ENCODE measurements at regions of chr7 and their contacts with region 1.

Region 1: DNA sequence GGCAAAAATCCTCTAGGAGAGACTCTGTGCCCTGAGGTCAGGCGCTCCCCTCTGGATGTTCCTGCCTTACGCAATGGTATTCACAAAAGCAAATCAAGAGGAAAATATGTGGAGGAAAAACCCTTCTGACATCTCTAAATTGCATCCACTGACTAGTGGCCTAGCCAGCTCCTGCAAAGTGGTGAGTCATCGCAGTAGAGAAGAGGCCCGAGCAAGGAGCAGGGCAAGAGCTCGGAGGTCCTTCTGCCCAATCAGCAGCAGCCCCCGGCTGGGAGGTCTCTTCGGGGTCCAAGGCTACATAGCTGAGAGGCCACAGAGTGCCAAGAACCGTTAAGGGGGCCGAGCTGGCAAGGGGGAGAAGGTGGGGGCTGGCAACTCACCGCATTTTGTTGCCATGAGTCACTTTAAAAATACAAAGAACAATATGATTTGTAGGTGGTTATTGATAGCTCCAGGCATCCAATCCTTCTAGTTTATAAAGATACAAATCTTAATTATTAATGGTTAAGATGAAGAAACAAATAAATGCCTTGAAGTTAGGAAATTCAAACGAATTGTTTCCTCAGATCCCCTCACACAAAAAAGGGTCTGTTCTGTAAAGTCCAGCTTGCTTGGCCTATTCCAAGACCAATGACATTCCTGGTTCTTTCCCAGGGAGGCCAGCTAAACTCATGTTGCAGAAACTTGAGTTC is 161.6 kb downstream of the PKD1L1 start:
- DNase-seq: peak in 1 of 2 donors; percentile 96
- H3K4me3 ChIP-seq: no peak overlapping the region
- H3K27ac ChIP-seq: peak overlapping the region; percentile 82
- H3K4me1 ChIP-seq: peaks cover 40% of the 10 kb centered on the region
- H3K27me3 ChIP-seq: no peaks in the 10 kb centered on the region
- CTCF ChIP-seq: peak in 1 of 3 experiments; percentile 9
- POLR2A ChIP-seq: no peak

Region 2: DNA sequence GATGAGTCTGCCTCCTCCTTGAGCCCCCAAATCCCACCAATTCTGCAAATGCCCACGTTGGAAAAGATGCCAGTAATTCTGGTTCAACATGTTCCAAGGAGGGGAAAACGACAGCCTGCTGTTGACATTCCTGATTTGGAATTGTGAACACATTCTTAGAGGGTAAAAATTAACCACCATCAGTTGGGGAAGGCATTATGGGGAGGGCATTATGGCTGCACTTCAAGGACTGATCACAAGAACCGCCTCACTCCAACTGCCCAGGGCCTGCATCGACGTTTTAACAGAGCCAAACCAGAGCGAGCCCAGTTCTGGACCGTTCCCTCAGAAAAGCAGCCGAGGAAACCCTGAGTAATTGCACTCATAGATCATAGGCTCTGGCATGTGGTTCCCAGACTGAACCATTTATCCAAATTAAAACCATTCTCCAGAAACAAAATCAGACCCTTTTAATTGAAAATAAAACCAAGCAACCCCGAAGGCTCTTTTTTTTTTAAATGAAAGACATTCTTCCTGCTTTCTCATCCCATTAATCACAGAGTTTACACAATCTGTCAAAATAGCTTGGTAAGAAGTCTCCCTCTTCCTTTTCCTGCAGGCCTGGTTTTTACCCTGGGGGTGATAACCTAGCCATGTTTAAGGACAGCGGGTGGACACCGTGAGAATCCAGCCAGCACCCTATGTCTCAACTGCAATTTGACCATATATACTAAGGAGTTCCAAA is 212.8 kb before region 1 on chr7:
- intact Hi-C with region 1: loop called (anchors 1 kb)
- DNase-seq: no peak
- H3K4me3 ChIP-seq: no peak overlapping the region
- H3K27ac ChIP-seq: peak overlapping the region; percentile 77
- H3K4me1 ChIP-seq: peaks cover 86% of the 10 kb centered on the region
- H3K27me3 ChIP-seq: no peaks in the 10 kb centered on the region
- CTCF ChIP-seq: no peak
- POLR2A ChIP-seq: no peak

Region 3: GRCh38 chr7:47827351-47827756 is 40.7 kb after region 1 on chr7:
- intact Hi-C with region 1: no loop called
- DNase-seq: no peak
- H3K4me3 ChIP-seq: no peak overlapping the region
- H3K27ac ChIP-seq: no peak overlapping the region
- H3K4me1 ChIP-seq: no peaks in the 10 kb centered on the region
- H3K27me3 ChIP-seq: no peaks in the 10 kb centered on the region
- CTCF ChIP-seq: no peak
- POLR2A ChIP-seq: no peak